Right ventricle myocardium superior (tissue), 1 donor: ENCODE measurements at regions of chr19 and their contacts with region 1.

Region 1: GRCh38 chr19:2315818-2316353 is 7.9 kb upstream of the LINGO3 start:
- DNase-seq: peak; percentile 88
- ATAC-seq: peak; percentile 94

Region 2: DNA sequence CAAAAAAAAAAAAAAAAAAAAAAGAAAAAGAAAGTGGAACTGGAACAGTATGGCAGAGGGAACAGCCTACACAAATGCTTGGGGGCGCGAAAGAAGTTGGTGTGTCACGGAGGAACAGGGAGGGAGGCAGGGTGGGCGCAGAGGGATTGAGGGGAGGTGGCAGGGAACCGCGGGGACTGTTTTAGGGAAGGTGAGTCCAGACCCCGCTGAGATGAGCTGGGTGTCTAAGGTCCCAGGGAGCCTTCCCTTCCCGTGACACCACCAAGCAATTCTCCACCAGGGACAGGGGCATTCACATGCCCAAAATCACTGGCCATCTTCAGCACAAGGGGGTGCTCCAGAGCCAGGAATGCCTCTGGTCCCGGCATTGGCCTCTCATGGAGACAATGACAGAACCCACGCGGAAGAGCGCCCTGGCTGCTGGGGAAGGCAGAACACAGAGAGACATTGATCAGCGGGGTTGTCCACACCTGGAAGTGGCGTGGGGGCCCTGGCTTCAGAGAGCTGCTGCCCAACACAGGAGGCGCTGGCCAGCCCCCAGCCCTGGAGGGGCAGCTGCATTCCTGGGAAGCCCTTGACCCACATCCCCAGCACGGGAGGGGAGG is 40.9 kb before region 1 on chr19:
- intact Hi-C with region 1: loop called (anchors 5 kb)
- DNase-seq: peak; percentile 78
- ATAC-seq: peak; percentile 36

Region 3: GRCh38 chr19:2287585-2288322 is 28.1 kb before region 1 on chr19:
- intact Hi-C with region 1: no loop called
- DNase-seq: no peak
- ATAC-seq: no peak

Region 4: DNA sequence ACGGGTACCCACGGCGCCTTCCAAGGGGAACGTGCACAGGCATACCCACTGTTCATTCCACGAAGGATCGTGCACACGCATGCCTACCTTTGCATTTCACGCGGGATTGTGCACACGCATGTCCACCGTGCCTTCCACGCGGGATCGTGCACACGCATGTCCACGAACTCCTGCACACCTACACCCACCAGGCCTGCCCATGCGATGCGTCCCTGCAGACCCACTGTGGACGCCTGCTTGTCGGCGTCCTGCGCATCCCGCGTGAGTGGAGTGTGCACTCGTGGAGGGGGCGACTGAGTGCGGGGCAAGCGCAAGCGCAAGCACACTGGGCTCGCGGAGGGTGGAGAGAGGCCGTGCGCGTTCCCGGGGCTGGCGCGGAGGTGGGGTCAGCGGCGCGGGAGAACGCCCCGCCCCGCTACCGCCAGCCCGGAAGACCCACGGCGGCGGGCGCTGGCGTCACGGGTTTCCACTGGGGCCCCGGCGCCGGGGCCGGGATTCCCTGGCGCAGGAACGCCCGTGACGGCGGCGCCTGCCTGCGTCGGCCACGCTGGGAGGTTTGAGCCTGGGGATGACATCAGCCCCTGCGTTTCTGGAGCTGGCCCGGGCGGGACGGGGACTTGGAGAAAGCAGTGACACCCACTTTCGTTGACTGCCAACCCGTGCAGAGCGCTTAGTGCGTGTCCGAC is 178.7 kb after region 1 on chr19:
- intact Hi-C with region 1: no loop called
- DNase-seq: peak; percentile 89
- ATAC-seq: peak; percentile 75